Dendritic cell treated with granulocyte-macrophage colony-stimulating factor and Interleukin-4, amounts not matched to agents 40 ng/mL and 50 ng/mL, for 4 days (primary cell): ENCODE measurements at regions of chr19 and their contacts with region 1.

Region 1: DNA sequence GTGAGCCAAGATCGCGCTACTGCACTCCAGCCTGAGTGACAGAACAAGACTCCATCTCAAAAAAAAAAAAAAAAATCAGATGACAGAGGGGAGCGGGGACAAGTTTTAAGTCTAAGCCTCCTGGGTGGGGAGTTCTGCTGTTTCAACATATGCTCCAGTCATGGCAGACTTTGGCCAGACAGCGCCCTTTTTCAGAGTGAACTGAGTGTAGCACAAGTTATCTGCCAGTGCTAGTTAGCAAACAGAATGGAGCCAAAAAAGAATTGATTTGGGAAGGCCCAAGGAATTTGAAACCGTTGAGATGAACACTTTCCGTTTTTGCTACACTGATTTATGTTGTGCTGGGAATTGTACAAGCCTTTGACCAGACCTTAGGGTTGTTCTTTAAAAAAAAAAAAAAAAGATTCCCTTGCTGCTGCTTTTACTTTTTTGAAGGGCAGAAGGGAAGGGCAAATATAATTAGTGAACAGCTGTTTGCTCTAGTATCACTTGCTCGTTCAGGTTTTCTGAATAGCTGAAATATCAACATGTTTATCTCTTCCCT is 5.7 kb downstream of the ACTN4 start:
- H3K4me3 Mint-ChIP-seq: peak overlapping the region; percentile 61
- H3K27ac Mint-ChIP-seq: peak overlapping the region; percentile 90
- H3K4me1 Mint-ChIP-seq: peaks cover 90% of the 10 kb centered on the region
- H3K27me3 Mint-ChIP-seq: no peaks in the 10 kb centered on the region

Region 2: DNA sequence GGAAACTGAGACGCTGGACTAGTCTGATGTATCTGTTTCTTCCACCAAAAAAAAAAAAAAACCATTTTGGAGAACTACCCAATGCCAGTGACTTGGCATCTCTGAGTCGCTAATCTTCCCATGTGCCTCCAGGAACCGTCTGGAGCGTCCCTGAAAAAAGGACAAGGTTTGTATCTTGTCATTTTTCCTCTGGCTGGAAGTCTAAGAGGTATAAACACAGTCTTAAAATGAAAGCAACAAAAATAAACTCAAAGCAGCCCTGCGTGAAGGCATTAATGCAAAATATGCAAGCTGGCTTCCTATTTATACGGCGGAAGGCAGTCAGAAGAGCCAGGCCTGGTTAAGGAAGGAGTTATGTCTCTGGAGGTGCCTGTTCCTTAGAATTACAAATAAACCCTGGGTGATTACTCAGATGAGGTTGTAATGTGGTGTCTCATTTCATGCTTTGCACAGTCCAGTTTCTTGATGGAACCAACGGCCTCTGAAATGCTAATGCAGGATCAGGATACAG is 14.6 kb after region 1 on chr19:
- intact Hi-C with region 1: loop called (anchors 2 kb)
- H3K4me3 Mint-ChIP-seq: no peak overlapping the region
- H3K27ac Mint-ChIP-seq: peak overlapping the region; percentile 84
- H3K4me1 Mint-ChIP-seq: peaks cover 97% of the 10 kb centered on the region
- H3K27me3 Mint-ChIP-seq: no peaks in the 10 kb centered on the region

Region 3: GRCh38 chr19:38693380-38694223 is 40.5 kb after region 1 on chr19:
- intact Hi-C with region 1: loop called (anchors 2 kb)
- H3K4me3 Mint-ChIP-seq: no peak overlapping the region
- H3K27ac Mint-ChIP-seq: peak overlapping the region; percentile 85
- H3K4me1 Mint-ChIP-seq: peaks cover 96% of the 10 kb centered on the region
- H3K27me3 Mint-ChIP-seq: no peaks in the 10 kb centered on the region

Region 4: DNA sequence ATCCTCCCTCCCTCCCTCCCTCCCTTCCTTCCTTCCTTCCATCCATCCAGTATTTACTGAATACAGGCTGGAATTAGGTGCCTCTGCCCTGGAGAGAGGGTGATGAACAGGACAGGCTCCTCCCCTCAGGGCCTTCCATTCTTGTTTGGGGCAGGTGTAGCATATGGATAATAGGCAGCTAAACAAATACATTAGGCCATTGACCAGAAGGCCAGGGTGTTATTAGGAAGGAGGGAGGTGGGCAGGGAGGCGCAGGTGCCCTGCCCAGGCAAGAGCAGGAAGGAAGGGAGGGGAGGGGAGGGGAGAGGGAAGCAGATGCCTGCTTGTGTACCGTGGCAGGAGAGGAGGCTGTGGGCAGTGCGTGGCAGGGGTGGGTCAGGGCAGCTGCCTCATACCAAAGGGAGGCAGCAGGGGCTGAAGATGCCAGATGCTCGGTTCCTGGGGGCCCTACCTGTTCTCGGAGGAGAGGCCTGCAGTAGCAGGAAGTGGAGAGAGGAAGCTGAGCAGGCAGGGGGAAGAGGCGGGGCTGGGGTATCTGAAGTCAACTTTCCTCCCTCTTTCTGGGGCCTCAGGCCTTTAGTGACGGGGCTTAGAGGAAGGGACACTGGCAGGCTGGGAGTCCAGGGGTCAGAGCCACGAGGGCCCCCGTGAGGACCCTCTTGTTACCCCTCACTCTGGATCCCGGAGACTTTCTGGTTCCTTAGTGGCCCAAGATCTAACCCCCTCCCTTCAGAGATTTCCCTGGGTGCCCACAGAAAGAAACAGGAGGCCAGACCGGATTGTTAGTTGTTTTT is 224.9 kb after region 1 on chr19 and contains the start of gene RINL:
- intact Hi-C with region 1: no loop called
- H3K4me3 Mint-ChIP-seq: no peak within 1 kb of the TSS
- H3K27ac Mint-ChIP-seq: peak within 1 kb of the TSS; percentile 73
- H3K4me1 Mint-ChIP-seq: peaks cover 19% of the 10 kb centered on the region
- H3K27me3 Mint-ChIP-seq: no peaks in the 10 kb centered on the region